ENCODE measurements at regions of chr18 and their contacts with region 1.

Region 1: GRCh38 chr18:35040988-35041814 is at the start of gene MAPRE2:
- DNase-seq: peak; percentile 99
- H3K4me3 Mint-ChIP-seq: peak within 1 kb of the TSS; percentile 98
- H3K27ac Mint-ChIP-seq: peak within 1 kb of the TSS; percentile 94
- H3K4me1 Mint-ChIP-seq: peaks cover 63% of the 10 kb centered on the region
- H3K27me3 Mint-ChIP-seq: no peaks in the 10 kb centered on the region
- total RNA-seq, gene MAPRE2: 46.4 to 46.5 TPM

Region 2: DNA sequence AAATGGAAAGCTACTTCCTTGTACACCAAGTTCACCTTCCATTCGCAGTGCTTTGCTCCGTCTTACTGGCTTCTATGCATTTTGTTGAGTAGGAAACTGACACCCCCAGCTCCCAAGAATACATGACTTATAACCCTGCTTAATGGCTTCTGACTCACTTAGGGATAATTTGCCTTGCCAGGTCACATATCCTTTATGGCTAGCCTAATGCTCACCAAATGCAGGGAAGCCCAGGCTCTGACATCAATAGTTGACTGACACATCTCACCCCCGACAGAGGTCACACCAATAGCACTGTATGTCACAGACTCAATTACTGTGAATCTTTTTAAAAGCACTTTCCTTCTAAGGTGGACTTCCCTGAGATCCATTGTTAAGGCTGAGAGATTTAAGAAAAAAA is 183.9 kb before region 1 on chr18:
- CTCF ChIA-PET with region 1: no interaction called
- POLR2A ChIA-PET with region 1: no interaction called
- intact Hi-C with region 1: loop called (anchors 1 kb)
- DNase-seq: no peak
- H3K4me3 Mint-ChIP-seq: no peak overlapping the region
- H3K27ac Mint-ChIP-seq: no peak overlapping the region
- H3K4me1 Mint-ChIP-seq: peaks cover 6% of the 10 kb centered on the region
- H3K27me3 Mint-ChIP-seq: peaks cover 31% of the 10 kb centered on the region

Region 3: GRCh38 chr18:35095983-35096676 is 54.9 kb after region 1 on chr18:
- CTCF ChIA-PET with region 1: interaction called, 3 read pairs
- POLR2A ChIA-PET with region 1: no interaction called
- intact Hi-C with region 1: loop called (anchors 2 kb)
- DNase-seq: no peak
- H3K4me3 Mint-ChIP-seq: no peak overlapping the region
- H3K27ac Mint-ChIP-seq: peak overlapping the region; percentile 19
- H3K4me1 Mint-ChIP-seq: peaks cover 22% of the 10 kb centered on the region
- H3K27me3 Mint-ChIP-seq: no peaks in the 10 kb centered on the region

Region 4: DNA sequence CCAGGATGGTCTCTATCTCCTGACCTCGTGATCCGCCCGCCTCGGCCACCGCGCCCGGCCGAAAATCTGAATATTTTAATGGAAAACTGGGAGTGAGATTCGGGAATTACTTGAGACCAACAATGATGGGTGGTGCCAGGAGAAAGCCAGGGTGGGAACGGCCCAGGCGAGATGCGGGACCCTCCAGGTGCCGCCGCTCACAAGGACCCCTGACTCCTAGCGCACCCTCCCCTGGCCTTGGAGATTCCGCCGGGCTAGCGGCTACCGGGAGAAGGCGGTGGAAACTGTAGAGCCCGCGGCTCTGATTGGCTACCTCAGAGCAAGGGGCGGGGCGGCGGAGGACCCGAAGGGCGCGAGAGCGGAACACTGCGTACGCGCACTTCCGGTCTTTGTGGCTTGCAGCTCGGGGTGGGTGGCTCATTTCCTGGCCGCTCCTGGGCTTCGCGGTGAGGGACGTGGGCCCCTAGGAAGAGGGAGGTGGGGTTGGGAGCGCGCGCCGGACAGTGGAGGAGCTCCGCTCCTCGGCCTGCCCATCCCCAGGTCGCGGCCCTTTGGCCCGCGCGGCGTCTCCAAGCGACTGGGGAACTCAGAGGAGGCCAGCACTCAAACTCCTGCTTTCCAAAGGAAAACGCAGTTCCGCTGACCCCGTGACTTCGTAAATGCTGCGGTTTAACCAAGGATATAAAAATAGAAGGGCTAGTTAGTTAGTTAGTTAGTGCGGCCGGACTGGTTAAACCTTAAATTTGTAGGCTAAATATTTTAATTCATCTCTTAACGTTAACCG is 199.7 kb after region 1 on chr18 and contains the start of gene ZNF397:
- CTCF ChIA-PET with region 1: no interaction called
- POLR2A ChIA-PET with region 1: interaction called, 6 read pairs
- intact Hi-C with region 1: loop called (anchors 1 kb)
- DNase-seq: peak; percentile 98
- H3K4me3 Mint-ChIP-seq: peak within 1 kb of the TSS; percentile 96
- H3K27ac Mint-ChIP-seq: peak within 1 kb of the TSS; percentile 98
- H3K4me1 Mint-ChIP-seq: peaks cover 26% of the 10 kb centered on the region
- H3K27me3 Mint-ChIP-seq: no peaks in the 10 kb centered on the region
- total RNA-seq, gene ZNF397: 19.2 to 19.6 TPM

Region 5: GRCh38 chr18:35376742-35377695 is 335.8 kb after region 1 on chr18 and contains the start of gene ZNF396:
- CTCF ChIA-PET with region 1: no interaction called
- POLR2A ChIA-PET with region 1: no interaction called
- intact Hi-C with region 1: loop called (anchors 10 kb)
- DNase-seq: peak; percentile 83
- H3K4me3 Mint-ChIP-seq: peak within 1 kb of the TSS; percentile 72
- H3K27ac Mint-ChIP-seq: no peak within 1 kb of the TSS
- H3K4me1 Mint-ChIP-seq: peaks cover 10% of the 10 kb centered on the region
- H3K27me3 Mint-ChIP-seq: no peaks in the 10 kb centered on the region
- total RNA-seq, gene ZNF396: 0.93 to 1.6 TPM

Region 6: GRCh38 chr18:35580701-35581539 is 539.7 kb after region 1 on chr18:
- CTCF ChIA-PET with region 1: no interaction called
- POLR2A ChIA-PET with region 1: no interaction called
- intact Hi-C with region 1: loop called (anchors 10 kb)
- DNase-seq: peak; percentile 61
- H3K4me3 Mint-ChIP-seq: peak overlapping the region; percentile 68
- H3K27ac Mint-ChIP-seq: peak overlapping the region; percentile 53
- H3K4me1 Mint-ChIP-seq: peaks cover 34% of the 10 kb centered on the region
- H3K27me3 Mint-ChIP-seq: peaks cover 25% of the 10 kb centered on the region

Region 7: GRCh38 chr18:36067055-36067957 is 1026.1 kb after region 1 on chr18 and contains the start of gene RPRD1A:
- CTCF ChIA-PET with region 1: no interaction called
- POLR2A ChIA-PET with region 1: no interaction called
- intact Hi-C with region 1: loop called (anchors 5 kb)
- DNase-seq: peak; percentile 98
- H3K4me3 Mint-ChIP-seq: peak within 1 kb of the TSS; percentile 92
- H3K27ac Mint-ChIP-seq: peak within 1 kb of the TSS; percentile 94
- H3K4me1 Mint-ChIP-seq: peaks cover 36% of the 10 kb centered on the region
- H3K27me3 Mint-ChIP-seq: no peaks in the 10 kb centered on the region
- total RNA-seq, gene RPRD1A: 25.9 to 29.6 TPM

Region 8: DNA sequence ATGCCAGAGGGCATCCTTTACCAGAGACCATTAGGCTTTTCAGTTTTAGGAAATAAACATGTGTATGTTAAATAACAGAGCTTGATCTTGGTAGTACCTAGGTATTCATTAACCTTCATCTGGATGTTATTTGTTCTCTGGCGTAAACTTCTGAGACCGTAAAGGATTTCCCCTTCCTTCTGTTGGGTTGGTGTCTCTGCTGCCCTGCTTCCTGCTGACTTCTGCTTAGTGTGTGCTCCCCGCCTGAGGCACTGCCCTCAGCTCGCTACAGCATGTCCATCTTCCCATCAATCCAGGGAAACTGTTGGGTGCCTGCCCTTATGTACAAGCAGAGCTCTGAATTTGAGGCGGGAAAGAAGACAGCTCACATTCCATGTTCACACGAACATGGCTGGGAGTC is 1609.7 kb after region 1 on chr18:
- CTCF ChIA-PET with region 1: no interaction called
- POLR2A ChIA-PET with region 1: no interaction called
- intact Hi-C with region 1: no loop called
- DNase-seq: no peak
- H3K4me3 Mint-ChIP-seq: no peak overlapping the region
- H3K27ac Mint-ChIP-seq: no peak overlapping the region
- H3K4me1 Mint-ChIP-seq: no peaks in the 10 kb centered on the region
- H3K27me3 Mint-ChIP-seq: peaks cover 12% of the 10 kb centered on the region